ENCODE measurements at regions of chr2 and their contacts with region 1.

Region 1: GRCh38 chr2:113080134-113080533 is 12.4 kb downstream of the IL1F10 start:
- DNase-seq: peak; percentile 23 to 89
- H3K4me3 ChIP-seq: no peak overlapping the region
- H3K27ac ChIP-seq: no peak overlapping the region
- H3K4me1 ChIP-seq: peaks cover 0 to 2% (median 0%) of the 10 kb centered on the region in 4 experiments; a peak in 1 of 7 replicates
- H3K27me3 ChIP-seq: no peaks in the 10 kb centered on the region; a peak in 1 of 7 replicates
- CTCF ChIP-seq: peak; percentile 86 to 88 (median 87)
- EP300 ChIP-seq: no peak
- POLR2A ChIP-seq: no peak
- RAD21 ChIP-seq: peak; percentile 81 to 85

Region 2: DNA sequence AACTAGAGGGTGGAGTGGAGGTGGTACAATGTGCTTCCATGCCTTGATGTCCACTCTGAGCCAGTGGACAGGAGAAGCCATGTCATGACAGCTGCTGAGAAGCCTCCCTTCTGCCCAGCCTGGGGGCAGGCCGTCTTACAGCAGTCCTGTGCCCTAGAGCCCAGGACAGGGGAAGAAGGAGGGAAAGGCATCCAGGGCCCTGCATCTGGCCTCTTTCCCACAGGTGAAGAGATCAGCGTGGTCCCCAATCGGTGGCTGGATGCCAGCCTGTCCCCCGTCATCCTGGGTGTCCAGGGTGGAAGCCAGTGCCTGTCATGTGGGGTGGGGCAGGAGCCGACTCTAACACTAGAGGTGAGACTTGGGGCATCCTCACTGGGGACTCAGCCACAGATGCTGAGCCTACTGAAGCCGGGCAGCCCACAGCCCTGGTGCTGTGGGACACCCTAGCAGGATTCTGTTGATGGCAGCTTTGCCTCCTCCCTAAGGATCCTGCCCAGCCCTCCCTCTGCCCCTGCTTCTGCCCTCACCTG is 18.2 kb before region 1 on chr2:
- CTCF ChIA-PET with region 1: interaction called, 12 read pairs
- POLR2A ChIA-PET with region 1: no interaction called
- DNase-seq: no peak
- H3K4me3 ChIP-seq: no peak overlapping the region
- H3K27ac ChIP-seq: no peak overlapping the region
- H3K4me1 ChIP-seq: no peaks in the 10 kb centered on the region
- H3K27me3 ChIP-seq: no peaks in the 10 kb centered on the region
- CTCF ChIP-seq: no peak
- EP300 ChIP-seq: no peak
- POLR2A ChIP-seq: no peak
- RAD21 ChIP-seq: no peak

Region 3: DNA sequence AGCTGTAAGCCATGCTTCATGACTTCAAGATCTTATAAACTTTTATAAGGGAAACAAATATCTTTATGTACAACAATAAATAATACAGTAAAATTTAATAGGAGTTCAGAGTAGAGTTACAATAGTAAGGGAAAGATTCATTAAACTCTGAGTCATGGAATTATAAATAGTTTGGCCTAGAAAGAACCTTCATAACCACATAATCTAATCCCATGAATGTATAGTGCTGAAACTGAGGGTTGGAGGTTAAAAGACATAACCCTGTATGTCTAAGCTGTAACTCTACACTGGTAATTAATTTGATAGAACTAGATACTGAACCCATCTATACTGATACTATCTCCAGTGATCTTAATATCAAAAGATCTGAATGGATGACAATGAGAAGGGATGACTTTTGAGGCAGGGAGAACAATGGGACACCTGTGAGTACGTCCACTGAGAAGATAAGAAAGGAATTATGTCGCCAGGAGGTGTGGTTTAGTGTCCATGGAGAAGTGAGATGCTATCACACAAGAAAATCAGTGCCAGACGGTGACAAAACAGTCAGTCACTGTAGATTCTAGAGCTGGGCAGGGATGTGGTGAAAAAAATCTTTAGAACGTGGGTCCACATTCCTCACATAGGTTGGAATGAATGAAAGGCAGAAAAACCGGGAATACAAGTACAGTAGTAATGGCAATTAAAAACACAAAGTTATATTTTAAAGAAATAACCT is 11.3 kb before region 1 on chr2:
- CTCF ChIA-PET with region 1: interaction called, 17 read pairs
- POLR2A ChIA-PET with region 1: no interaction called
- DNase-seq: no peak
- H3K4me3 ChIP-seq: no peak overlapping the region
- H3K27ac ChIP-seq: no peak overlapping the region
- H3K4me1 ChIP-seq: no peaks in the 10 kb centered on the region
- H3K27me3 ChIP-seq: no peaks in the 10 kb centered on the region
- CTCF ChIP-seq: no peak
- EP300 ChIP-seq: no peak
- POLR2A ChIP-seq: no peak
- RAD21 ChIP-seq: no peak

Region 4: DNA sequence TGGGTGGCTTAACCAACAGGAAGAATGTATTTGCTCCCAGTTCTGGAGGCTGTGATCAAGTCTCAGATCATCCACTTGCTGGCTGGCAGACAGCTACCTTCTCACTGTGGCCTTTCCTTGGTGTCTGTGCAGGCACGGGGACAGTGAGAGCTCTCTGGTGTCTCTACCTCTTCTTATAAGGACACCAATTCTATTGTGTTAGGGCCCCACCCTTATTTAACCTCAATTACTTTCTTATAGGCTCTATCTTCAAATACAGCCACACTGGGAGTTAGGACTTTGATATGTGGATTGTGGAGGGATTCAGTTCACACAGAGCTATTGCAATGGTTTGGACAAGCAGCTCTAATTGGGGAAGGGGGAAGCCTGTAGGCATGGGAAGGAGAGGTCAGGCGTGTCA is 22.0 kb after region 1 on chr2:
- CTCF ChIA-PET with region 1: interaction called, 15 read pairs
- POLR2A ChIA-PET with region 1: no interaction called
- DNase-seq: no peak
- H3K4me3 ChIP-seq: no peak overlapping the region
- H3K27ac ChIP-seq: no peak overlapping the region
- H3K4me1 ChIP-seq: no peaks in the 10 kb centered on the region
- H3K27me3 ChIP-seq: no peaks in the 10 kb centered on the region
- CTCF ChIP-seq: no peak
- EP300 ChIP-seq: no peak
- POLR2A ChIP-seq: no peak
- RAD21 ChIP-seq: no peak

Region 5: DNA sequence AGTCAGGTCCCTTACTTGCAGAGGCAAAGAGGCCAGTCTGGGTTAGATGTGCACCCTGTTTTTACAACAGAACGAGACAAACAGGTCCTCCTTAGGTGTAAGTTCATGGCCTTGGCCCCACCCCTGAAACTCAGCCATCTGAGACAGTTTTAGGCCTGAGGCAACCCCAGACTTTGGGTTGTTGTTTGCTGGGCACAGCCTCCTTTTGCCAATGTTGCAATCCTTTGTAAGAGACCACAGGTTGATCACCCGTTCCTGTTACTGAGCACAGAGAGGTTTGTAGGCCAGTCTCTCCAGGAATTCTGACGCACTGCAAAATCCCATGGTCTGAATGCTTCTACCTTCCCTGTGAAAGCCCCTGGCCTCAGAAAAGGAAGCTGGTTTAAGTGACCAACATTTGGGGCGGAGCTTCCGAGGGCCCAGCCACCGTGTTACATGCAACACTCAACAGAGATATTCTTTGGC is 31.7 kb after region 1 on chr2:
- CTCF ChIA-PET with region 1: interaction called, 10 read pairs
- POLR2A ChIA-PET with region 1: no interaction called
- DNase-seq: no peak
- H3K4me3 ChIP-seq: no peak overlapping the region
- H3K27ac ChIP-seq: no peak overlapping the region
- H3K4me1 ChIP-seq: peaks cover 0 to 4% (median 0%) of the 10 kb centered on the region in 4 experiments; a peak in 1 of 7 replicates
- H3K27me3 ChIP-seq: no peaks in the 10 kb centered on the region
- CTCF ChIP-seq: no peak
- EP300 ChIP-seq: no peak
- POLR2A ChIP-seq: no peak
- RAD21 ChIP-seq: no peak

Region 6: DNA sequence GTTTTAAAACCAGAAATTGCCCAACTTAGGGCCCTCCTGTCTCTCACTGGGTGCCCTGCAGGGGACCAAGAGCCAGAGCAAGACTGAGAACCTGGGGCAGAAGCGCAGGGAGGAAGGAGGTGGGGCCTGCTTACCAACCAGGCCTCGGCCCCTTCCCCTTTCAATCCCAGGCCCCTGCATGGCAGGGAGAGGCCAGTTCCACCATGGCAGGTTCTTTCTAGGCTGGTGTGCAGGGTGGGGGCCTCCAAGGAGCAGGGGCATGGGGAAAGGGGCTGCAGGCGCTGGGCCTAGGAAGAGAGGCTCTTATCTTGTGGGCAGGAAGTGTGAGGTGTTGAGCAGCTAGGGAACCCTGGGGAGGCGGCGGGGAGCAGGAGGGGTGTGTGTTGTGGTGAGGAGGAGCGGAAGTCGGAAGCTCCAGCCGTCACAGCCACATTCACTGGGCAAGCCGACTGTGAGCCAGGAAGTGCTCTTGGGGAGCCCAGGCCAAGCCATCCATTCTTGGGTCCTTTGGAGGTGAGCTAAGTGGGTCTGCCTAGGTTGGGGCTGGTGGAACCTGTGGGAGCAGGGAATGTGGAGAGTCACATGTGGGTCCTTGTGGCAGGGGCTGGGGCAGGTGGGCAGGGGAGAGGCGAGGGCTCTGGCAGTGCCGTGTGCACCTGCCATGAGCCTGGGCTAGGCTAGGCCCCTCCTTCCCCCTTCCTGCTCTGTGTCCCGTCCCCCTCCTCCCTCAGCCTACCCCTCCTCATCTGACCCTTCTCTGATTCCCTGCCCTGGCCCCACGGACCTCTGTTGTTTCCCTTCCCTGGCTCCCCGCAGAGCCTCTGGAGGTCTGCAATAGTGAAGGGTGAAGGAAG is 93.6 kb after region 1 on chr2 and contains the start of gene PSD4:
- CTCF ChIA-PET with region 1: interaction called, 10 read pairs
- POLR2A ChIA-PET with region 1: no interaction called
- DNase-seq: no peak
- H3K4me3 ChIP-seq: no peak within 1 kb of the TSS
- H3K27ac ChIP-seq: no peak within 1 kb of the TSS
- H3K4me1 ChIP-seq: peaks cover 0 to 3% (median 0%) of the 10 kb centered on the region in 4 experiments; a peak in 3 of 7 replicates
- H3K27me3 ChIP-seq: no peaks in the 10 kb centered on the region
- CTCF ChIP-seq: no peak
- EP300 ChIP-seq: no peak
- POLR2A ChIP-seq: no peak
- RAD21 ChIP-seq: no peak
- total RNA-seq, gene PSD4: 1.2 and 1.3 TPM in 2 replicates